Activated B cell treated with CpG ODN at 0.5 μM for 24 hours (primary cell): ENCODE measurements at regions of chr19 and their contacts with region 1.

Region 1: DNA sequence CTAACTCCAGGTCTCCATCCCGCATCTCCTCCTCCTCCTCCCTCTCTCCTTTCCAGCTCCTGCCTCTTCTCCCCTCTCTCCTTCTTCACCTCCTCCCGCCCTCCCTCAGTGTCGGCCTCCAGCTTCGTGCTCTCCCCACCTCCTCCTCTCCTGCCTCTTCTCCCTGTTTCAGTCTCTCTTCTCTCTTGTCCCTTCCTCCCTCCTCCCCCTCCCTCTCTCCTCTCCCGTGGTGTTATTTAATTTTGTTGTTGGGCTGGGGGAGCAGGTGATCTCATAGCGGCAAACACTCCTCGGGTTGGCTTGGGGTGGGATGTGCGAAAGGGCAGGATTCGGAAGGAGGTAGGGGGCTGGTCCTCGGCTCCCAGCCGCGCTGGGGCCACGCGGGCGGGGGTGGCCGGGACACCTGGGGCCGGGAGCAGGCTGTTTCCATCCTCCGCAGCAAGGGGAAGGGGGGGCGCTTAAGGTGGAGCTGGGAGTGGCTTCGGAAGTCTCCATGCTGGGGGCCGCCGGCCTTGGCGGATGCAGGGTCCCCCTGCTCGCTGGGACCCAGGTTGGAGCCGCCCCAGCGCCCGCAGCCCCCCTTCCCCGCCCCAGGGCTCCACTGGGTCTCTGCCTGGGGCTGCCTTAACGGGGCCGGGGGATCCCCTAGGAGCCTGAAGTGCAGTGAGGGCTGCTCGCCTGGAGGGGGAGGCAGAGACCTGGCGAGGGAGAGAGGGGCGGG is at the start of gene CA11:
- DNase-seq: peak; percentile 91
- ATAC-seq: peak; percentile 90
- H3K4me3 Mint-ChIP-seq: peak within 1 kb of the TSS; percentile 93
- H3K27ac Mint-ChIP-seq: peak within 1 kb of the TSS; percentile 92
- H3K4me1 Mint-ChIP-seq: peaks cover 50% of the 10 kb centered on the region
- H3K27me3 Mint-ChIP-seq: no peaks in the 10 kb centered on the region
- CTCF ChIP-seq: no peak
- total RNA-seq, gene CA11: 9.5 and 10.3 TPM in 2 replicates

Region 2: DNA sequence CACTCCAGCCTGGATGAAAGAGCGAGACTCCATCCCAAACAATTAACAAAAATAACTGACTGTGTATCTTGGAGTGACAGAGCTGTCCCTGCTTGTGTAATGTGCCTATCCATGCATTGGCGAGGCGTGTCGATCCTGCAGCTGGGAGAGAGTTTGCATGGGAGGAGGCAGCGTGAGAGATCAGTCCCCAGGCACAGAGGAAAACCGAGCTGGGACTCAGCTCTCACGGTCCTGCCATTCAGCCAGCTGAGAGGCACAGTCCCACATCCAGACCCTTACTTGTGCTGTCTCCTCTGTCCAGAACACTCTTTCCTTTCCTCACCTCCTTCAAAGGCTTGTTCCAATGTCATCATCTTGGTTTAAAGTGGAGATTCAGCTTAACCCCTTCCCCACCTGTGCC is 106.1 kb before region 1 on chr19:
- CTCF ChIA-PET with region 1: no interaction called
- POLR2A ChIA-PET with region 1: no interaction called
- intact Hi-C with region 1: no loop called
- DNase-seq: no peak
- ATAC-seq: no peak
- H3K4me3 Mint-ChIP-seq: no peak overlapping the region
- H3K27ac Mint-ChIP-seq: no peak overlapping the region
- H3K4me1 Mint-ChIP-seq: no peaks in the 10 kb centered on the region
- H3K27me3 Mint-ChIP-seq: no peaks in the 10 kb centered on the region
- CTCF ChIP-seq: no peak

Region 3: DNA sequence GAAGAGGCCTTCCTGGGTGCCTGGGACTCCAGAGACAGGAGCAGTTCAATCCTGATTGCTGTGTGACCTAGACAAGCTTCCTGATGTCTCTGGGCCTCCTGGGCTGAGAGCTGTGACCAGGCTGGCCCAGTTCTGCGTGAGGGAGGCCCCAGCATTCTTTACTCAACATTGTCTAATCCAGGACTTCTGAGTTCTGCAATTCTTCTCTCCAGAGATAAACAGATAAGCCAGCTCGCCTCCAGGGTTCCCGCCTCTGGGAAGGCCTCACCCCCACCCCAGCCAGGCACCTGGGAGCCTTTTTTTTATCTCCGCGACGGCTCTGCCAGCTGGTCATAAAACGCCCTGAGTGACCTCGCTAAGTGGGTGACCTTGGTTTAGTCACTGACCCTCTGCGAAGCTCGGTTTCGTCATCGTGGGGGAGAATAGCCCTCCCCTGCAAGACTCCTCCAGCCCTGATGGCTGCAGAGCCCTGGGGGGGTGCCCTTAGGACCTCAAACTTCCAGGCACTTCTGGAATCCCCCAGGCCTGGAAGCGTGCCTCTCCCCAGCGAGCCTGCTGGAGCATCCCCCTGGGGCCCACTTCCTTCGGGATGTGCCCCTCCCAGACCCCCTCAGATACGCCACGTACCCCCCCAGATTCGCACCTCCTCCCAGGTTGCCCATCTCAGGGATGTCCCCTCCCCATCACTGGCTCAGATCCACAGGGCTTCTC is 92.3 kb before region 1 on chr19:
- CTCF ChIA-PET with region 1: no interaction called
- POLR2A ChIA-PET with region 1: no interaction called
- intact Hi-C with region 1: no loop called
- DNase-seq: no peak
- ATAC-seq: no peak
- H3K4me3 Mint-ChIP-seq: no peak overlapping the region
- H3K27ac Mint-ChIP-seq: no peak overlapping the region
- H3K4me1 Mint-ChIP-seq: no peaks in the 10 kb centered on the region
- H3K27me3 Mint-ChIP-seq: peaks cover 24% of the 10 kb centered on the region
- CTCF ChIP-seq: no peak

Region 4: GRCh38 chr19:48618916-48619691 is 27.1 kb before region 1 on chr19 and contains the starts of genes RPL18 and SPHK2:
- CTCF ChIA-PET with region 1: interaction called, 4 read pairs
- POLR2A ChIA-PET with region 1: interaction called, 30 read pairs
- intact Hi-C with region 1: loop called (anchors 1 kb)
- DNase-seq: peak; percentile 93
- ATAC-seq: peak; percentile 81
- H3K4me3 Mint-ChIP-seq: peak within 1 kb of the TSS; percentile 98
- H3K27ac Mint-ChIP-seq: peak within 1 kb of the TSS; percentile 97
- H3K4me1 Mint-ChIP-seq: peaks cover 56% of the 10 kb centered on the region
- H3K27me3 Mint-ChIP-seq: no peaks in the 10 kb centered on the region
- CTCF ChIP-seq: no peak
- total RNA-seq, gene RPL18: 2,427 and 2,762 TPM in 2 replicates
- total RNA-seq, gene SPHK2: 38.2 and 48.5 TPM in 2 replicates

Region 5: GRCh38 chr19:48660854-48661731 is 14.9 kb after region 1 on chr19:
- CTCF ChIA-PET with region 1: no interaction called
- POLR2A ChIA-PET with region 1: interaction called, 4 read pairs
- intact Hi-C with region 1: loop called (anchors 1 kb)
- DNase-seq: peak; percentile 63
- ATAC-seq: peak; percentile 94
- H3K4me3 Mint-ChIP-seq: peak overlapping the region; percentile 82
- H3K27ac Mint-ChIP-seq: peak overlapping the region; percentile 95
- H3K4me1 Mint-ChIP-seq: peaks cover 16% of the 10 kb centered on the region
- H3K27me3 Mint-ChIP-seq: no peaks in the 10 kb centered on the region
- CTCF ChIP-seq: no peak

Region 6: GRCh38 chr19:48713864-48714758 is 68.0 kb after region 1 on chr19:
- CTCF ChIA-PET with region 1: no interaction called
- POLR2A ChIA-PET with region 1: interaction called, 6 read pairs
- intact Hi-C with region 1: loop called (anchors 1 kb)
- DNase-seq: peak; percentile 94
- ATAC-seq: peak; percentile 91
- H3K4me3 Mint-ChIP-seq: peak overlapping the region; percentile 81
- H3K27ac Mint-ChIP-seq: peak overlapping the region; percentile 77
- H3K4me1 Mint-ChIP-seq: peaks cover 25% of the 10 kb centered on the region
- H3K27me3 Mint-ChIP-seq: no peaks in the 10 kb centered on the region
- CTCF ChIP-seq: no peak

Region 7: GRCh38 chr19:48835734-48836088 is 189.6 kb after region 1 on chr19:
- CTCF ChIA-PET with region 1: interaction called, 6 read pairs
- POLR2A ChIA-PET with region 1: interaction called, 6 read pairs
- intact Hi-C with region 1: loop called (anchors 1 kb)
- DNase-seq: peak; percentile 89
- ATAC-seq: peak; percentile 86
- H3K4me3 Mint-ChIP-seq: peak overlapping the region; percentile 88
- H3K27ac Mint-ChIP-seq: peak overlapping the region; percentile 75
- H3K4me1 Mint-ChIP-seq: peaks cover 26% of the 10 kb centered on the region
- H3K27me3 Mint-ChIP-seq: no peaks in the 10 kb centered on the region
- CTCF ChIP-seq: no peak

Region 8: DNA sequence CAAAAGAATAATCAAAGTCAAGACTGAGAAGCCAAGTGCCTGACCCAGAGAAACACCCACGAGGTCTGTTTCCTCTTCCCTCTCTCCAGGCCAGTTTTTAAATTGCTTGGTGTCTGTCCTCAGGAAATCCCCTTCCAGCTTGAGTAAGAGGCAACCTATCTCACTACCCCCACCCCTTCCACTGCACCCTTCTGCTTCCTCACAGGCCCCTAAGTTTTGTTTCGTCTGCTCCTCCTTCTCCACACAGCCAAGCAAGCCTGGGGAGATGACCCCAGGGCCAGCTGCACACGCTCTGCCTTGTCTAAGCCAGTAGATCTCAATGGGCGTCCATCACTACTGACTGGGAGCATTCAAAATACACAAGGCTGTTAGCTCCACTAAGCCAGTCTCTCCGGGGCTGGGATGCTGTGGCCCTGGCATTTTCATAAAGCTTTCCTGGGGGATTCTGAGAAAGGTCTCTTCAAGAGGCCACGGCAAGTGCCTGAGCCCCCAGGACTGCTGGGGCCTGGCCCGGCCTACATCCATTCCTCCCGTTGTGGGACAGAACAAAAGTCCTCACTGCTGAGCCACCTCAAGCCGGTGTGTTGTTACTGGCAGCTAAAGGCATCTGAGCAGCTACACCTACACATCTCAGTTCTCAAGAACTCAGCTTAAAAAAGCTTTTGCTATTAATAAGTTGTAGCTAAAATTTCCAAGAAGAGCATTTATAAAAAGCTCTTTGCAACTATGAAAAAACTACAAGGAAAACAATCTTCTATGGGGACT is 1265.4 kb after region 1 on chr19:
- CTCF ChIA-PET with region 1: no interaction called
- POLR2A ChIA-PET with region 1: interaction called, 15 read pairs
- intact Hi-C with region 1: no loop called
- DNase-seq: no peak
- ATAC-seq: peak; percentile 80
- H3K4me3 Mint-ChIP-seq: peak overlapping the region; percentile 68
- H3K27ac Mint-ChIP-seq: peak overlapping the region; percentile 89
- H3K4me1 Mint-ChIP-seq: peaks cover 76% of the 10 kb centered on the region
- H3K27me3 Mint-ChIP-seq: no peaks in the 10 kb centered on the region
- CTCF ChIP-seq: no peak